Panc1 (cell line): ENCODE measurements at regions of chr7 and their contacts with region 1.

Region 1: DNA sequence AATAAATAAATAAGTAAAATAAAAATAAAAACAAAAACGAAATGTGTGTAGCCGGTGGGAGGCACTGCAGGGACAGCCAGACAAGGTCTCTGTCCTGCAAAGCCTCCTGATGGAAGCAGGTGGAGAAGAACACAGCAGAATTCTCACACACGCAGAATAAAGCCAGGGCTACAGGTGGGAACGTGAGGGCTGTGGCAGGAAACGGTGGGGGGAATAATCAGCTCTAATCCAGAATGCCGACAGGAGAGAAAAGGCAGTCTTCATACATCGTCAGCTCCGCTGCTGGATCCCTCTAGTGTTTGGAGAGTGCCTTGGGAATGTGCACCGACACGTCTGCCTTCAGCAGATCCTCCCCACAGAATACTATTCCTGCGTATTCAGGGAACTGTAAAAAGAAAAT is 6.8 kb upstream of the SNX8 start:
- DNase-seq: no peak
- ATAC-seq: 0 out of 2 replicates have a peak, but pooled peaks have one; percentile 43
- H3K4me3 ChIP-seq: no peak overlapping the region
- H3K27ac ChIP-seq: no peak overlapping the region
- H3K4me1 ChIP-seq: no peaks in the 10 kb centered on the region
- H3K27me3 ChIP-seq: no peaks in the 10 kb centered on the region
- CTCF ChIP-seq: no peak

Region 2: DNA sequence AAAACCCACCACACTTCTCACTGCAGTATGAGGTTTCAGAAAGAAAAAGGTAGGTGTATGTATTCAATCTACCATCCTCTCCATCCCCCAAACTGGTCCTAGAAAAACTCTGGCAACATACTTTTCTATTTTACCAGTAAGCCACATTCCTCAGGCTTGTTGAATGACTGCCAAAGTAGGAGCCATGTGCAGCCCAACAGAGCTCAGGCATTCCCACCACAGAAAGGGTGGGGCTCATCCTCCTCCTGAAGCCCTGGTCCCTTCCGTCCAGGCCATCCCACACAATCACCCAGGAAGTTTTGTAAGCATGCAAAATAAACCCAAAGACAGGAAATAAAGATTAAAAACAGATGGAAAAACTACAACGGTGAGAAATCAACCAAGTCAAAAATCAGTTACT is 145.5 kb before region 1 on chr7:
- CTCF ChIA-PET with region 1: no interaction called
- POLR2A ChIA-PET with region 1: interaction called, 24 read pairs
- in situ Hi-C with region 1: no loop called
- intact Hi-C with region 1: no loop called
- DNase-seq: no peak
- ATAC-seq: no peak
- H3K4me3 ChIP-seq: no peak overlapping the region
- H3K27ac ChIP-seq: no peak overlapping the region
- H3K4me1 ChIP-seq: peaks cover 10% of the 10 kb centered on the region; the same call in 1 of the 2 replicates
- H3K27me3 ChIP-seq: no peaks in the 10 kb centered on the region
- CTCF ChIP-seq: no peak

Region 3: DNA sequence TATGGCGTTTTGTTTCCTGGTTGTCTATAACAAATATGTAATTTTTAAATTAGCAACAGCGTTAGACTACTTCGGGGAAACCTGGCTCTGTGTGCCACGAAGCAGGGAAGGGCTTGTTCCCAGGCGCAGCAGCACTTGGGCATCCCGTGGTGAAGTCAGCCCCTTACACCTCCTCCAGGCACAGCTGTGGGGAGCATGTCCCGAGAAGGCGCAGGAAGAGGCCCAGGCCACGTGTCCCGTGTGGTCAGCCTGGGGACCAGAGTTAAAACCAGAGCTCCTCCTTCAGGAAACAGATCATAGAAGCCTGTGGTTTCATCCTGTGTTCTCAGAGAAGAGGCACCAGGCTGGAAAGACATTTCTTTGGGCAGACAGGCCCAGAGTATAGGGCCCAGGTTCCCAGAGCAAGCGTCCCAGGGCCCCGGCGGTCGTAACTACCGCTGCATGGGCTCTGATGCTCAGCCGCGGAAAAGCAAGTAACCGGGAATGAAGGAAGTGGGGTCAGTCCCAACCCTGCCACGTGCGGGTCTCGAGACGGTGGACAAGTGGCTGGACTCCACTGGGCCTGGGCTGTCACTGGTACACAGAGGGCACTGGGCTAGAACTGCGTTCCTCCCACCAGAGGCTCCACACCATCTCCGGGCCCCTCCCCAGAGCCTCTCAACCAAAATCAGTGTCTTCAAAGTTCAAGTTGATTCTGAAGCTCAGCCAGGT is 71.9 kb before region 1 on chr7:
- CTCF ChIA-PET with region 1: interaction called, 12 read pairs
- POLR2A ChIA-PET with region 1: no interaction called
- in situ Hi-C with region 1: no loop called
- intact Hi-C with region 1: no loop called
- DNase-seq: no peak
- ATAC-seq: peak; percentile 63
- H3K4me3 ChIP-seq: no peak overlapping the region
- H3K27ac ChIP-seq: peak overlapping the region; percentile 55; the same call in 1 of the 2 replicates
- H3K4me1 ChIP-seq: peaks cover 5% of the 10 kb centered on the region
- H3K27me3 ChIP-seq: no peaks in the 10 kb centered on the region
- CTCF ChIP-seq: no peak

Region 4: DNA sequence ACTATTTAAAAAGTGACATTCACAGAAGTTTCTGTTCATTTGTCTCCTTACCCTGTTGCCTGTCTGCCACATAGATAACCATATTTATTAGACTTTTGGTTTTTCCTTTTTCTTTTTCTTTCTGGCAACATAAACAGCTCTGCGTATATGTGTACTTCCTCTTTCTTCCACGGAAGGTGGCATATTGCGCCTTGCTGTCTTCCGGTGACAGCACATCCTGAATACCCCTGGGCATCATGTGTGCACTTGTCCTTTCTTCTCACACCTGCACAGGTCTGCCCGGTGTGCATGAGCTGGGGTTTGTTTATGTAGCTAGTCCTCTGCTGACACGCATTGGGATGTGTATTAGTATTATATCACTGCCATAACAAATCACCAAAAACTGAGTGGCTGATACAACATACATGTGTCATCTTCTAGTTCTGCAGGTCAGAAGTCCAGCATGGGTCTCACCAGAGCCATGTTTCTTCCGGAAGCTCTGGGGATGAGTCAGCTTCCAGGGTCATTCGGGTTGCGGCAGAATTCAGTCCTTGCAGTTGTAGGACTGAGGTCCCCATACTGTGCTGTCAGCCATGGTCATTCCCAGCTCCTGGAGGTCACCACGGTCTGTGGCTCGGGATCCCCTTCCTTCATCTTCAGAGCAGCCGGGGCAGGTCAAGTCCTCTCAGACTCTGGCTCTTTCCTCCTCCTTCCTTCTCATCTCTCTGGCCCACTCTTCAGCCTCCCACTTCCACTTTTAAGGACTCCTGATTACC is 1765.1 kb after region 1 on chr7:
- CTCF ChIA-PET with region 1: no interaction called
- POLR2A ChIA-PET with region 1: no interaction called
- in situ Hi-C with region 1: no loop called
- intact Hi-C with region 1: no loop called
- DNase-seq: no peak
- ATAC-seq: no peak
- H3K4me3 ChIP-seq: no peak overlapping the region
- H3K27ac ChIP-seq: no peak overlapping the region
- H3K4me1 ChIP-seq: no peaks in the 10 kb centered on the region
- H3K27me3 ChIP-seq: no peaks in the 10 kb centered on the region
- CTCF ChIP-seq: no peak